SK-N-SH (cell line): ENCODE measurements at regions of chr2 and their contacts with region 1.

Region 1: GRCh38 chr2:166361351-166362153 is 14.2 kb downstream of the SCN9A start:
- DNase-seq: peak; percentile 22
- H3K4me3 ChIP-seq: no peak overlapping the region
- H3K27ac ChIP-seq: peak overlapping the region; percentile 53 to 66
- H3K4me1 ChIP-seq: peaks cover 3 to 11% of the 10 kb centered on the region in 2 experiments; a peak in 3 of 4 replicates
- H3K27me3 ChIP-seq: no peaks in the 10 kb centered on the region
- CTCF ChIP-seq: peak; percentile 87
- EP300 ChIP-seq: no peak
- RAD21 ChIP-seq: peak; percentile 79

Region 2: DNA sequence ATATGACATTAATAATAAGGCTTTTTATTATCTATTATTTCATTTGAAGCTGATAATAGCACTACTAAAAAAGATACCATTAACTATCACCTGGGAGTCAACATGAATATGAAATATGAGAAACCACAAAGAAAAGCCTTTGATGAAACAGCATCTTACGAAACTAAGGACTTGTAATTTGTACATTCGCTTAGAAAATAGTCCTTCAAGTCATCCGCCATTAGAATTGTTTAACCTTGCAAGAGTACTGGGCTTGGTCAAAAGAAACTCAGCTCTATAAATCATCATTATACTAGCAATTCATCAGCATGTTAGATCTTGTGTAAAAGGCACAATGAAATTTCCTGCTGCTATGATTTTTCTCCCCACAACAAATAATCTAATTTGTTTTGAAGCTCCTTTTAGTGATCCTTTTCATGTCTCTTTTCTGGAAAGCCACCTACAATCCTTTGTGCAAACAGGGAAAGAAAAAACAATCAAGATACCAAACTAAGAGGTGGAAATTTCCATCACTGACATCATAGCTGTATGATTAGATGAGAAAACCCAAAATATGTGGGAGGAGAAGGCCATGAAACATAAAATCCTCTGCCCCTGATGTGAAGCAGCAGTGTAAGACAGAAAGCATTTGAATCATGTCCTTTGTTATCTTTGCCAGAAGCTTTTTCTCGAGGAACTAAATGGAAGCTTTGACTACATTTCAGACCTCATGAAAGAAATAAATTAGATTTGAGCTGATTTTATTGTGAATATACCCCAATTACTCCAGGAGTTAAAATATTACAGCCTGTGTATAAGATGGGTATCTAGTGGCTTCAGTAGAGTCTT is 17.1 kb before region 1 on chr2:
- CTCF ChIA-PET with region 1: interaction called, 15 read pairs
- POLR2A ChIA-PET with region 1: no interaction called
- DNase-seq: peak; percentile 38
- H3K4me3 ChIP-seq: no peak overlapping the region
- H3K27ac ChIP-seq: peak overlapping the region; percentile 87 to 96
- H3K4me1 ChIP-seq: peaks cover 17 to 35% of the 10 kb centered on the region in 2 experiments; a peak in 3 of 4 replicates
- H3K27me3 ChIP-seq: no peaks in the 10 kb centered on the region
- CTCF ChIP-seq: no peak
- EP300 ChIP-seq: peak in 1 of 2 experiments; percentile 72; a peak in 2 of 4 replicates
- RAD21 ChIP-seq: 0 out of 2 replicates have a peak, but pooled peaks have one; percentile 0

Region 3: GRCh38 chr2:166351319-166351718 is 10.2 kb before region 1 on chr2:
- CTCF ChIA-PET with region 1: interaction called, 26 read pairs
- POLR2A ChIA-PET with region 1: no interaction called
- DNase-seq: no peak
- H3K4me3 ChIP-seq: no peak overlapping the region
- H3K27ac ChIP-seq: peak overlapping the region; percentile 33 to 55; a peak in 3 of 4 replicates
- H3K4me1 ChIP-seq: peaks cover 9 to 22% of the 10 kb centered on the region in 2 experiments; a peak in 2 of 4 replicates
- H3K27me3 ChIP-seq: no peaks in the 10 kb centered on the region
- CTCF ChIP-seq: no peak
- EP300 ChIP-seq: 0 out of 4 replicates have a peak, but pooled peaks of 1 of the 2 experiments have one; percentile 19
- RAD21 ChIP-seq: no peak

Region 4: DNA sequence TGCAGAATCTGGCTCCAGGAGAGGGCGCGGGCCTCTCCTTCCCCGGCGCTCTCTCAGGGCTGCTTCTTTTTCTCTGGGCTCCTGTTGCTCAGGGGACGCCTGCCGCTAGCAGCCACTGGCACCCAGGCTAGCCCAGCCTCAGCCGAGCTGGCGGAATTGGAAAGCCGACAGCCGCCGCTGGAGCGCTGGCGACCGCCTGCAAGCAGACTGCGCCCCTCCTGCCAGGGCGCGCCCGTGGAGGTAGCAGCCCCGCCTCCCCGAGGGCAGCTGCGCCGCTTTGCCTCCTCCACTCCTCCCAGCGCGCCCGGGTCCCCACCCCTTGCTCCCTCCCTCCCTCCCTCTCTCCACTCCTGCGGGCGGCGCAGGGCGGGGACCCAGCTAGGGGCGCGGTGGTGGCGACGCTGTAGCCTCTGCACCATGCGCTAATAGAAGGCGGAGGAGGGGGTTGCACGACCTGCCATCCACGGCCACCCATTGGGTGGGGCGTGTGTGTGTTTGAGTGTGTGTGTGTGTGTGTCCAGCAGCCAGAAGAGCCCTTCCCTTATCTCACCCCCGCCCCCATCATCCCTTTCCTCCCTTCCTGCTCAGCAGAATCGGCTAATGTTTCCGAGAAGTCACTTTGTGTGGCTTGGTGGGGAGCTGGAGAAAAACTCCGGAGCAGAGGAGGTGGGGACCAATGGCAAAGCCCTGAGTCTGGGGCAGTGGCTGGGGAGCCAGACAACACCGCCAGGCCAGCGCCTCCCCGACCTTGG is 14.4 kb after region 1 on chr2 and contains the start of gene SCN9A:
- CTCF ChIA-PET with region 1: interaction called, 21 read pairs
- POLR2A ChIA-PET with region 1: interaction called, 3 read pairs
- DNase-seq: peak; percentile 93
- H3K4me3 ChIP-seq: peak within 1 kb of the TSS; percentile 70 to 87
- H3K27ac ChIP-seq: peak within 1 kb of the TSS; percentile 69 to 91
- H3K4me1 ChIP-seq: peaks cover 4 to 5% of the 10 kb centered on the region in 2 experiments; a peak in 2 of 4 replicates
- H3K27me3 ChIP-seq: no peaks in the 10 kb centered on the region
- CTCF ChIP-seq: no peak
- EP300 ChIP-seq: peak in 1 of 2 experiments; percentile 43; a peak in 1 of 4 replicates
- RAD21 ChIP-seq: no peak; the same call in 1 of the 2 replicates
- polyA plus RNA-seq, gene SCN9A: 5.9 and 7.8 TPM in 2 replicates

Region 5: GRCh38 chr2:166384774-166385173 is 23.2 kb after region 1 on chr2:
- CTCF ChIA-PET with region 1: interaction called, 27 read pairs
- POLR2A ChIA-PET with region 1: no interaction called
- DNase-seq: peak; percentile 42
- H3K4me3 ChIP-seq: no peak overlapping the region
- H3K27ac ChIP-seq: no peak overlapping the region
- H3K4me1 ChIP-seq: no peaks in the 10 kb centered on the region
- H3K27me3 ChIP-seq: no peaks in the 10 kb centered on the region
- CTCF ChIP-seq: peak; percentile 70
- EP300 ChIP-seq: no peak
- RAD21 ChIP-seq: peak; percentile 45; the same call in 1 of the 2 replicates

Region 6: GRCh38 chr2:166417669-166418068 is 56.1 kb after region 1 on chr2:
- CTCF ChIA-PET with region 1: interaction called, 12 read pairs
- POLR2A ChIA-PET with region 1: no interaction called
- DNase-seq: no peak
- H3K4me3 ChIP-seq: no peak overlapping the region
- H3K27ac ChIP-seq: no peak overlapping the region
- H3K4me1 ChIP-seq: peaks cover 3 to 9% of the 10 kb centered on the region in 2 experiments; a peak in 2 of 4 replicates
- H3K27me3 ChIP-seq: no peaks in the 10 kb centered on the region
- CTCF ChIP-seq: 0 out of 2 replicates have a peak, but pooled peaks have one; percentile 19
- EP300 ChIP-seq: no peak
- RAD21 ChIP-seq: peak; percentile 53